ENCODE measurements at regions of chr6 and their contacts with region 1.

Region 1: GRCh38 chr6:53410508-53411258 is 61.9 kb upstream of the ELOVL5 start:
- DNase-seq: peak; percentile 87
- H3K4me3 ChIP-seq: peak overlapping the region in 1 of 8 donors; percentile 29
- H3K27ac ChIP-seq: no peak overlapping the region
- H3K4me1 ChIP-seq: peaks cover 0 to 13% (median 3%) of the 10 kb centered on the region in 6 donors
- H3K27me3 ChIP-seq: no peaks in the 10 kb centered on the region
- CTCF ChIP-seq: peak; percentile 35 to 76 (median 68)
- POLR2A ChIP-seq: no peak

Region 2: GRCh38 chr6:52964318-52964717 is 446.4 kb before region 1 on chr6:
- intact Hi-C with region 1: no loop called
- DNase-seq: no peak
- H3K4me3 ChIP-seq: no peak overlapping the region
- H3K27ac ChIP-seq: no peak overlapping the region
- H3K4me1 ChIP-seq: no peaks in the 10 kb centered on the region
- H3K27me3 ChIP-seq: no peaks in the 10 kb centered on the region
- CTCF ChIP-seq: no peak
- POLR2A ChIP-seq: no peak

Region 3: GRCh38 chr6:53484476-53485280 is 74.0 kb after region 1 on chr6:
- intact Hi-C with region 1: loop called (anchors 10 kb)
- DNase-seq: no peak
- H3K4me3 ChIP-seq: peak overlapping the region in 2 of 8 donors; percentile 5 to 21
- H3K27ac ChIP-seq: peak overlapping the region in 6 of 8 donors; percentile 5 to 80 (median 64)
- H3K4me1 ChIP-seq: peaks cover 16 to 52% (median 34%) of the 10 kb centered on the region in 6 donors
- H3K27me3 ChIP-seq: peaks cover 0 to 7% (median 0%) of the 10 kb centered on the region in 7 donors
- CTCF ChIP-seq: peak; percentile 78 to 98 (median 92)
- POLR2A ChIP-seq: no peak

Measured in spleen (tissue), 13 donors.